Right cardiac atrium (tissue), 5 donors: ENCODE measurements at regions of chr2 and their contacts with region 1.

Region 1: GRCh38 chr2:32063310-32064161 is at the start of gene SPAST:
- DNase-seq: peak; percentile 98 to 100 (median 99)
- ATAC-seq: peak; percentile 98
- H3K4me3 ChIP-seq: peak within 1 kb of the TSS; percentile 97
- H3K27ac ChIP-seq: peak within 1 kb of the TSS; percentile 88
- H3K4me1 ChIP-seq: peaks cover 2% of the 10 kb centered on the region
- H3K27me3 ChIP-seq: no peaks in the 10 kb centered on the region
- total RNA-seq, gene SPAST: 8.1 to 9.1 (median 8.6) TPM

Region 2: GRCh38 chr2:32010670-32011484 is 52.7 kb before region 1 on chr2 and contains the start of gene MEMO1:
- intact Hi-C with region 1: loop called in 1 of 4 experiments (anchors 5 kb)
- DNase-seq: peak; percentile 94 to 98 (median 97)
- ATAC-seq: peak; percentile 93
- H3K4me3 ChIP-seq: peak within 1 kb of the TSS; percentile 62
- H3K27ac ChIP-seq: peak within 1 kb of the TSS; percentile 98
- H3K4me1 ChIP-seq: no peaks in the 10 kb centered on the region
- H3K27me3 ChIP-seq: no peaks in the 10 kb centered on the region
- total RNA-seq, gene MEMO1: 33.0 to 39.7 (median 37.0) TPM